Activated CD8-positive, alpha-beta T cell treated with anti-CD3 and anti-CD28 coated beads, Interleukin-2, amount 10 ng/mL, durations not matched to agents 7 days and 5 days (primary cell): ENCODE measurements at regions of chr17 and their contacts with region 1.

Region 1: DNA sequence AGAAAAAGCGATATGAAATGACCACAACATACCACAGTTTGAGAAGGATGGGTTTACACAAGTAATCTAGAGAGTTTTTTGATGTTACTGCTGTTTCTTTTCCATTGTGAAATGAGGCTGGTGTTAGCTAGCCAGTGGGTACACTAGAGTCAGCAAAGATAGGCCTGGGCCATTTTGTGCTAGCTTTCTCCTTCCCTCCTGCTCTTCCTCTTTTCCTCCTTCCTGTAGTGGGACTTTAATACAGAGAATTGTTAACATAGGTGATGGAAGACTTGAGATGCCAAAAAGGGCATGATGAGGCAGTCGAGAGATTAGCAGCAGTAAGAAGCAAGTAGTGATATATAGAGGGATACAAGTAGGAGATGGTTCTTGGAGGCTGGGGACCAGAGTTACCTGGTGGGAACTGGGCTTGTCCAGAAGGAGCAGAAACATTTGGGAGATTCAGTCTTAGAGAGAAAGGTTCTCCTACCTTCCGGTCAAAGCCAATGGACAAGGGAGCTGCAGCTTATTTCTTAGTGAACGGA is 7.7 kb downstream of the NSRP1 start:
- DNase-seq: no peak
- ATAC-seq: no peak
- H3K4me3 Mint-ChIP-seq: no peak overlapping the region
- H3K27ac Mint-ChIP-seq: no peak overlapping the region
- H3K4me1 Mint-ChIP-seq: peaks cover 31% of the 10 kb centered on the region
- H3K27me3 Mint-ChIP-seq: no peaks in the 10 kb centered on the region

Region 2: DNA sequence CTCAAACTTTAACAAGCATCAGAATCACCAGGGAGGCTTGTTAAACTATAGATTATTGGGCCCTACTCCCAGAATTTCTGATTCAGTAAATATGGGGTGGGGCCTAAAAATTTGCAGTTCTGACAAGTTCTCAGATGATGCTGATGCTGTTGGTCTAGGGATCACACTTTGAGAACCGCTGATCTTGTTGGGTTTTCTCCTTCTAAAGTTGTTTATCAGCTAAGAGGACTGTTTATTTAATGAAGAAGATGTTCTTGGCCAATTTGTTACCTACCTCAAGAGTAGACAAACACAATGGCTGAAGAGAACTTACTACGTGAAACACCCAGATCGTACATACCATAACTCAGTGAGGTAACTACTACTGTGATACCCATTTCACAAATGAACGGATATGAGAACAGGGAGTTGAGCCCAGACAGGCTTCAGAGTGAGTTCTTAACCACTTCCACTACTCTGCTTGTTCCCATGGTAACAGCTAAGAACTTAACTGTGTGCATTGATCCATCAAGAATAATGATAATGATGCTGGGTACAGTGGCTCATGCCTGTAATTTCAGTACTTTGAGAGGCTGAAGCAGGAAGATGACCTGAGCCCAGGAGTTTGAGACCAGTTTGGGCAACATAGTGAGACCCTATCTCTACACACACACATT is 93.0 kb before region 1 on chr17:
- CTCF ChIA-PET with region 1: no interaction called
- POLR2A ChIA-PET with region 1: no interaction called
- DNase-seq: no peak
- ATAC-seq: peak; percentile 55
- H3K4me3 Mint-ChIP-seq: no peak overlapping the region
- H3K27ac Mint-ChIP-seq: no peak overlapping the region
- H3K4me1 Mint-ChIP-seq: no peaks in the 10 kb centered on the region
- H3K27me3 Mint-ChIP-seq: peaks cover 4% of the 10 kb centered on the region

Region 3: GRCh38 chr17:30074730-30075129 is 49.6 kb before region 1 on chr17:
- CTCF ChIA-PET with region 1: no interaction called
- POLR2A ChIA-PET with region 1: no interaction called
- DNase-seq: no peak
- ATAC-seq: no peak
- H3K4me3 Mint-ChIP-seq: no peak overlapping the region
- H3K27ac Mint-ChIP-seq: no peak overlapping the region
- H3K4me1 Mint-ChIP-seq: no peaks in the 10 kb centered on the region
- H3K27me3 Mint-ChIP-seq: peaks cover 44% of the 10 kb centered on the region

Region 4: GRCh38 chr17:30134551-30134950 is 10.2 kb after region 1 on chr17:
- CTCF ChIA-PET with region 1: interaction called, 16 read pairs
- POLR2A ChIA-PET with region 1: no interaction called
- DNase-seq: no peak
- ATAC-seq: no peak
- H3K4me3 Mint-ChIP-seq: no peak overlapping the region
- H3K27ac Mint-ChIP-seq: no peak overlapping the region
- H3K4me1 Mint-ChIP-seq: peaks cover 10% of the 10 kb centered on the region
- H3K27me3 Mint-ChIP-seq: no peaks in the 10 kb centered on the region

Region 5: DNA sequence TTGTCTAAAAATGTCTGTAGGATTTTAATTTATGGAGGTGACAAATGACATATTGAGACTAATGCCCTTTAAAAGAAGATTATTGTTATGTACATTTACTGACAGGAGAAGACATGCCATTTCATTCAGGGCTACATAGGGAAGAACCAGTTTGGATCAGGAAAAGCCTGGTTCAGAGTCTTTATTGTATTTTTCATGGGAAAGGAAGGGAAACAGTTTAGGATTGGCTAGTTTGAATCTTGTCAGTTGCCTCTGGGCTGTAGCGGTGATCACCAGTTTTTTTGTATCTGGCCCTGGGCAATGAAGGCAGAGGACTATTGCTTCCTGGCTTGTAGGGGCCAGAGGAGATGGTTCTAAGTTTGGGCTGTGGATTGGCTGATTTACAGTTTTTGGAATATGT is 24.0 kb after region 1 on chr17:
- CTCF ChIA-PET with region 1: interaction called, 16 read pairs
- POLR2A ChIA-PET with region 1: no interaction called
- DNase-seq: no peak
- ATAC-seq: no peak
- H3K4me3 Mint-ChIP-seq: no peak overlapping the region
- H3K27ac Mint-ChIP-seq: no peak overlapping the region
- H3K4me1 Mint-ChIP-seq: peaks cover 14% of the 10 kb centered on the region
- H3K27me3 Mint-ChIP-seq: no peaks in the 10 kb centered on the region

Region 6: DNA sequence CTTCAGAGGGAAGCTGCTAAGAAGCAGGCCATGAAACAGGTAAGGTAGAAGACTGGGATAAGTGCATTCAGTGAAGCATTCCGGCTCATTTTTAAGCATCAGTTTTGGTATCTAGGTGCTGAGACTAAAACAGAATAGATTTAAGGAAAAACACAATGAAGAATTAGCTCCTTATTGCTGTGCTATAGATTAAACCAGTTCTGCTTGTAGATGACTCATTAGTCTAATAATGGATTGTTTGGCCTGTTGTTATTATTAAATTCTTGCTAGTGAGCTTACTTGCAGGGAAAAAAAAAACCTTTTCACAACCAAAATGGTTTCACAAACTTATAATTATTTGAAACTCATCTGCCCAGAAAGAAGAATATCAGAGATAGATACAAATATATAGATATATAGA is 48.2 kb after region 1 on chr17:
- CTCF ChIA-PET with region 1: interaction called, 11 read pairs
- POLR2A ChIA-PET with region 1: no interaction called
- DNase-seq: no peak
- ATAC-seq: no peak
- H3K4me3 Mint-ChIP-seq: no peak overlapping the region
- H3K27ac Mint-ChIP-seq: no peak overlapping the region
- H3K4me1 Mint-ChIP-seq: peaks cover 26% of the 10 kb centered on the region
- H3K27me3 Mint-ChIP-seq: no peaks in the 10 kb centered on the region

Region 7: DNA sequence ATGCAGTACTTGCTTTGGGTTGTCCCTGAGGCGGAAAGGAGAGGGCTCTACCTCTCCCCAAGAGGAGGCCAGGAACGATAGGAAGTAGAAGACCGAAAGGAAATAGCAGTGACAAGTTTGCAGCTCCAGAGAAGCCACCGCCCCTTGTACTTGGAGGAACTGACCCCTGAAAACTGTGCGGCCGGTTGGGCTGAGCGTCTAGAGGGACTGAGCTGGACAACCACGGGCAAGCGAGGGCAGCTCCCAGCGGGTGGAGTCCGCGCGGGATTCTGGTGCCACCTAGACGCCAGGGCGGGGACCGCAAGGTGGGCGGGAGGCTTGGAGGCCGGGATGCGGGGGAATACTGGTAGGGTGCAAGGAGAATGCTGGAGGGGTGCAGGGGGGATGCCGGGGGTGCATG is 112.4 kb after region 1 on chr17:
- CTCF ChIA-PET with region 1: interaction called, 17 read pairs
- POLR2A ChIA-PET with region 1: no interaction called
- DNase-seq: peak; percentile 28
- ATAC-seq: no peak
- H3K4me3 Mint-ChIP-seq: peak overlapping the region; percentile 53
- H3K27ac Mint-ChIP-seq: no peak overlapping the region
- H3K4me1 Mint-ChIP-seq: peaks cover 31% of the 10 kb centered on the region
- H3K27me3 Mint-ChIP-seq: peaks cover 65% of the 10 kb centered on the region